Activated CD4-positive, alpha-beta T cell treated with anti-CD3 and anti-CD28 coated beads for 36 hours (primary cell): ENCODE measurements at regions of chr20 and their contacts with region 1.

Region 1: GRCh38 chr20:63537525-63538203 is 488 bp upstream of the PTK6 start:
- DNase-seq: peak; percentile 98
- ATAC-seq: peak; percentile 97
- H3K4me3 Mint-ChIP-seq: peak overlapping the region; percentile 68
- H3K27ac Mint-ChIP-seq: peak overlapping the region; percentile 85
- H3K4me1 Mint-ChIP-seq: peaks cover 8% of the 10 kb centered on the region
- H3K27me3 Mint-ChIP-seq: no peaks in the 10 kb centered on the region

Region 2: GRCh38 chr20:63425846-63426485 is 111.7 kb before region 1 on chr20:
- CTCF ChIA-PET with region 1: no interaction called
- POLR2A ChIA-PET with region 1: no interaction called
- intact Hi-C with region 1: no loop called
- DNase-seq: no peak
- ATAC-seq: no peak
- H3K4me3 Mint-ChIP-seq: no peak overlapping the region
- H3K27ac Mint-ChIP-seq: no peak overlapping the region
- H3K4me1 Mint-ChIP-seq: no peaks in the 10 kb centered on the region
- H3K27me3 Mint-ChIP-seq: no peaks in the 10 kb centered on the region

Region 3: GRCh38 chr20:63553227-63553932 is 15.7 kb after region 1 on chr20:
- CTCF ChIA-PET with region 1: interaction called, 9 read pairs
- POLR2A ChIA-PET with region 1: no interaction called
- intact Hi-C with region 1: loop called (anchors 1 kb)
- DNase-seq: peak; percentile 95
- ATAC-seq: peak; percentile 88
- H3K4me3 Mint-ChIP-seq: no peak overlapping the region
- H3K27ac Mint-ChIP-seq: peak overlapping the region; percentile 45
- H3K4me1 Mint-ChIP-seq: peaks cover 11% of the 10 kb centered on the region
- H3K27me3 Mint-ChIP-seq: no peaks in the 10 kb centered on the region

Region 4: GRCh38 chr20:63641792-63642544 is 104.3 kb after region 1 on chr20:
- CTCF ChIA-PET with region 1: interaction called, 14 read pairs
- POLR2A ChIA-PET with region 1: interaction called, 4 read pairs
- intact Hi-C with region 1: loop called (anchors 1 to 5 kb)
- DNase-seq: peak; percentile 98
- ATAC-seq: peak; percentile 73
- H3K4me3 Mint-ChIP-seq: peak overlapping the region; percentile 65
- H3K27ac Mint-ChIP-seq: no peak overlapping the region
- H3K4me1 Mint-ChIP-seq: peaks cover 31% of the 10 kb centered on the region
- H3K27me3 Mint-ChIP-seq: no peaks in the 10 kb centered on the region

Region 5: DNA sequence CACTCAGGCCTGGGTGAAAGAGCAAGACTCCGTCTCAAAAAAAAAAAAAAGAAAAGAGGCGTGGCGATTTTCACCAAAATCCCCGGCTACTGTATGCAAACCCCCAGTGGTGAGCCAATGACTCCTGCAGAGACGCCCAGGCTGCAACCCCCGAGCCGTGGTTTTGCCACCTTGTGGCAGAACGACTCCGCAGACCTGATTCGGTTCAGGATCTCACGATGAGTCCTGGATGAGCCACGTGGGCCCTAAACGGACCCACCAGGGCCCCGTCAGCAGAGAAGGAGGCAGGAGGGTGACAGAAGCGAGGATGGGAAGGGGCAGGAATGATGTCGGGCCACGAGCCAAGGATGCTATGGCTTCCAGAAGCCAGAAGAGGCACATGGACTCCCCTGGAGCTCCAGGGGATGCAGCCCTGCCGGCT is 244.4 kb after region 1 on chr20:
- CTCF ChIA-PET with region 1: no interaction called
- POLR2A ChIA-PET with region 1: no interaction called
- intact Hi-C with region 1: loop called in 1 of 2 experiments (anchors 1 kb)
- DNase-seq: peak; percentile 84
- ATAC-seq: peak; percentile 94
- H3K4me3 Mint-ChIP-seq: no peak overlapping the region
- H3K27ac Mint-ChIP-seq: peak overlapping the region; percentile 28
- H3K4me1 Mint-ChIP-seq: peaks cover 19% of the 10 kb centered on the region
- H3K27me3 Mint-ChIP-seq: no peaks in the 10 kb centered on the region

Region 6: GRCh38 chr20:63973636-63974402 is 436.2 kb after region 1 on chr20:
- CTCF ChIA-PET with region 1: interaction called, 10 read pairs
- POLR2A ChIA-PET with region 1: no interaction called
- intact Hi-C with region 1: loop called in 1 of 2 experiments (anchors 1 kb)
- DNase-seq: peak; percentile 89
- ATAC-seq: peak; percentile 34
- H3K4me3 Mint-ChIP-seq: no peak overlapping the region
- H3K27ac Mint-ChIP-seq: no peak overlapping the region
- H3K4me1 Mint-ChIP-seq: peaks cover 41% of the 10 kb centered on the region
- H3K27me3 Mint-ChIP-seq: no peaks in the 10 kb centered on the region

Region 7: DNA sequence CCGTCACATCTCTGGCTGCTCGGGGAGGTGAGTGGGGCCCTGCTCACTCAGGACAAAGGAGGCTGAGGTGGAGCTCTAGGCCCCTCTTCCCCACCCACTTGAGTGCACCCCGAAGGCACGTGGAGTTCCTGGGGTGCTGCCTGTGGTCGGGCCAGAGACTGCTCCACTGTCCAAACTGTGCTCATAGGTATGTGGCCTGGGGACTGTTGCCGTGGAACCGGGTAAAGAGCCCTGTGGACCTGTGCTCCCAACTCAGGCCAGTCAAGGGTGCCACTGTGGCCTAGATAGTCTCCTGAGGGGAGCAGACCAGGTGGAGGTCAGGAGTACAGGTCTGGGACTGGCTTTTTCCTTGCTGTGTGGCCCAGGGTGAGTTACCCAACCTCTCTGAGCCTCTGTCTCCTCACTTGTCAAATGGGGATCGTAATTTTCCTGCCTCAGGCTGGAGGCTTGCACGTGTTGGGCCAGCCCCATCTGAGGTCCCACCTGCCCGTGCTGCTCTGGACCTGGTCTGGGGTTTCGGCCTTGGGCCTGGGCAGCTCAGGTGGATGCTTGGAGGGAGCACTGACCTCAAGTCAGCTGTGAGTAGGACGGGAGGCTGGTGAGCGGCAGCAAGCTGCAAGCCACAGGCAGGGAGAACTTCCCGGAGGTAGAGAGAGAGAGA is 582.1 kb after region 1 on chr20:
- CTCF ChIA-PET with region 1: no interaction called
- POLR2A ChIA-PET with region 1: no interaction called
- intact Hi-C with region 1: loop called in 1 of 2 experiments (anchors 1 kb)
- DNase-seq: no peak
- ATAC-seq: peak; percentile 25
- H3K4me3 Mint-ChIP-seq: peak overlapping the region; percentile 41
- H3K27ac Mint-ChIP-seq: peak overlapping the region; percentile 66
- H3K4me1 Mint-ChIP-seq: peaks cover 10% of the 10 kb centered on the region
- H3K27me3 Mint-ChIP-seq: peaks cover 5% of the 10 kb centered on the region